ENCODE measurements at regions of chr10 and their contacts with region 1.

Region 1: GRCh38 chr10:43689955-43690771 is 41.5 kb upstream of the ZNF32 start:
- DNase-seq: no peak
- H3K4me3 ChIP-seq: peak overlapping the region; percentile 69
- CTCF ChIP-seq: peak; percentile 90

Region 2: DNA sequence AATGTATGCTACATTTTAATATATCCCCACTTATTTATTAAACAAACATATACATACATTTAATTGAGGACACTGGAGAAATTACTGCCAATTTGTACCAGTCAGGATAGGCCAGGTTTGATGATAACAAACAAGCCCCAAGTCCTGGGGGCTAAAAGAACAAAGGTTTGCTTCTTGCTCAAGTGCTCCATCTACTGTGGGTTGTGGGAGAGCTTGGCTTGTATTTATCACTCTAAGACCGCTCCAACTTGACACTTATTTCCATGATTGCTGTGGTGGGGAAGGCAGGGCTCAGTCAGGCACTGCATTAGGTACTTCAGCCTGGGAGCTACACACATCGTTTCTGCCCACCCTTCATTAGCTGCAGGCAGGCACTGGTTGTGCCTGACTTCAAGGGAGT is 95.1 kb after region 1 on chr10:
- CTCF ChIA-PET with region 1: interaction called, 13 read pairs
- POLR2A ChIA-PET with region 1: no interaction called
- DNase-seq: no peak
- H3K4me3 ChIP-seq: no peak overlapping the region
- CTCF ChIP-seq: no peak

Region 3: GRCh38 chr10:43846187-43846680 is 156.1 kb after region 1 on chr10:
- CTCF ChIA-PET with region 1: interaction called, 15 read pairs
- POLR2A ChIA-PET with region 1: no interaction called
- DNase-seq: no peak
- H3K4me3 ChIP-seq: peak overlapping the region; percentile 25
- CTCF ChIP-seq: no peak

Region 4: GRCh38 chr10:43867667-43868565 is 177.8 kb after region 1 on chr10:
- CTCF ChIA-PET with region 1: interaction called, 10 read pairs
- POLR2A ChIA-PET with region 1: interaction called, 6 read pairs
- DNase-seq: peak; percentile 71
- H3K4me3 ChIP-seq: peak overlapping the region; percentile 53
- CTCF ChIP-seq: no peak

Region 5: GRCh38 chr10:44310762-44311562 is 620.8 kb after region 1 on chr10:
- CTCF ChIA-PET with region 1: interaction called, 31 read pairs
- POLR2A ChIA-PET with region 1: no interaction called
- DNase-seq: no peak
- H3K4me3 ChIP-seq: peak overlapping the region; percentile 23
- CTCF ChIP-seq: peak; percentile 91

Region 6: GRCh38 chr10:44857363-44858016 is 1167.3 kb after region 1 on chr10:
- CTCF ChIA-PET with region 1: interaction called, 11 read pairs
- POLR2A ChIA-PET with region 1: no interaction called
- DNase-seq: no peak
- H3K4me3 ChIP-seq: no peak overlapping the region
- CTCF ChIP-seq: peak; percentile 98

Measured in AG04449 (cell line).